Naive thymus-derived CD4-positive, alpha-beta T cell (primary cell): ENCODE measurements at regions of chr14 and their contacts with region 1.

Region 1: GRCh38 chr14:36520601-36521525 is 831 bp upstream of the NKX2-1 start:
- DNase-seq: no peak
- ATAC-seq: no peak
- H3K4me3 ChIP-seq: no peak overlapping the region
- H3K4me3 Mint-ChIP-seq: peak overlapping the region in 8 of 10 donors; percentile 7 to 80 (median 50)
- H3K27ac ChIP-seq: no peak overlapping the region
- H3K27ac Mint-ChIP-seq: peak overlapping the region in 1 of 9 donors; percentile 18
- H3K4me1 ChIP-seq: no peaks in the 10 kb centered on the region
- H3K4me1 Mint-ChIP-seq: peaks cover 4 to 34% (median 24%) of the 10 kb centered on the region in 7 donors
- H3K27me3 ChIP-seq: peaks cover 6 to 16% of the 10 kb centered on the region in 2 donors
- H3K27me3 Mint-ChIP-seq: peaks cover 52 to 77% (median 60%) of the 10 kb centered on the region in 5 donors

Region 2: DNA sequence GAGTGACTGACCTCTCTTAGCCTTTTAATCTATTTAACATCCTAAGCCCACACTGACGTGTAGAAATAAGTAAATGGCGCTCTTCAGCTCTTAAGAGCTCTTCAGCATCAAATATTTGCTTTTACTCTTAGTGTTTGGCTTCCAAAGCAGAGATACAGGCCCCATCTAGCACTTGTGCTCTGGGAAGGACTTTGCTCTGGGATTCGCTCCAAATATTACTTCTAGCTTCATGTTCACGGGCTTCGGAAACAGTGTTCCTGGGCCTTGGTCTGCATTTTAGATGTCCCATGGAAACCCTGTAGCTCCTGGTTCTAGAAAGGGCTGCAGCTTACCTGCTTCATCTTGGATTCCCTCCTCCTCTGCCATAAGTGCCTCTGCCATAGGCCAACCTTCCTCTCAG is 64.2 kb after region 1 on chr14:
- CTCF ChIA-PET with region 1: no interaction called
- POLR2A ChIA-PET with region 1: no interaction called
- intact Hi-C with region 1: loop called in 1 of 2 experiments (anchors 2 kb)
- DNase-seq: no peak
- ATAC-seq: no peak
- H3K4me3 ChIP-seq: no peak overlapping the region
- H3K4me3 Mint-ChIP-seq: no peak overlapping the region
- H3K27ac ChIP-seq: no peak overlapping the region
- H3K27ac Mint-ChIP-seq: no peak overlapping the region
- H3K4me1 ChIP-seq: no peaks in the 10 kb centered on the region
- H3K4me1 Mint-ChIP-seq: peaks cover 0 to 3% (median 0%) of the 10 kb centered on the region in 7 donors
- H3K27me3 ChIP-seq: peaks cover 0 to 10% of the 10 kb centered on the region in 2 donors
- H3K27me3 Mint-ChIP-seq: peaks cover 53 to 81% (median 61%) of the 10 kb centered on the region in 5 donors

Region 3: GRCh38 chr14:36604757-36605505 is 84.1 kb after region 1 on chr14:
- CTCF ChIA-PET with region 1: no interaction called
- POLR2A ChIA-PET with region 1: no interaction called
- intact Hi-C with region 1: no loop called
- DNase-seq: peak in 6 of 9 donors; percentile 2 to 23 (median 5)
- ATAC-seq: no peak
- H3K4me3 ChIP-seq: no peak overlapping the region
- H3K4me3 Mint-ChIP-seq: no peak overlapping the region
- H3K27ac ChIP-seq: no peak overlapping the region
- H3K27ac Mint-ChIP-seq: no peak overlapping the region
- H3K4me1 ChIP-seq: no peaks in the 10 kb centered on the region
- H3K4me1 Mint-ChIP-seq: no peaks in the 10 kb centered on the region
- H3K27me3 ChIP-seq: no peaks in the 10 kb centered on the region
- H3K27me3 Mint-ChIP-seq: peaks cover 5 to 21% (median 14%) of the 10 kb centered on the region in 5 donors

Region 4: GRCh38 chr14:36655963-36656686 is 135.3 kb after region 1 on chr14:
- CTCF ChIA-PET with region 1: no interaction called
- POLR2A ChIA-PET with region 1: no interaction called
- intact Hi-C with region 1: loop called in 1 of 2 experiments (anchors 5 kb)
- DNase-seq: no peak
- ATAC-seq: no peak
- H3K4me3 ChIP-seq: no peak overlapping the region
- H3K4me3 Mint-ChIP-seq: peak overlapping the region in 9 of 10 donors; percentile 35 to 75 (median 54)
- H3K27ac ChIP-seq: no peak overlapping the region
- H3K27ac Mint-ChIP-seq: peak overlapping the region in 1 of 9 donors; percentile 55
- H3K4me1 ChIP-seq: peaks cover 0 to 6% of the 10 kb centered on the region in 2 donors
- H3K4me1 Mint-ChIP-seq: peaks cover 10 to 44% (median 37%) of the 10 kb centered on the region in 7 donors
- H3K27me3 ChIP-seq: peaks cover 7 to 20% of the 10 kb centered on the region in 2 donors
- H3K27me3 Mint-ChIP-seq: peaks cover 85 to 99% (median 89%) of the 10 kb centered on the region in 5 donors

Region 5: DNA sequence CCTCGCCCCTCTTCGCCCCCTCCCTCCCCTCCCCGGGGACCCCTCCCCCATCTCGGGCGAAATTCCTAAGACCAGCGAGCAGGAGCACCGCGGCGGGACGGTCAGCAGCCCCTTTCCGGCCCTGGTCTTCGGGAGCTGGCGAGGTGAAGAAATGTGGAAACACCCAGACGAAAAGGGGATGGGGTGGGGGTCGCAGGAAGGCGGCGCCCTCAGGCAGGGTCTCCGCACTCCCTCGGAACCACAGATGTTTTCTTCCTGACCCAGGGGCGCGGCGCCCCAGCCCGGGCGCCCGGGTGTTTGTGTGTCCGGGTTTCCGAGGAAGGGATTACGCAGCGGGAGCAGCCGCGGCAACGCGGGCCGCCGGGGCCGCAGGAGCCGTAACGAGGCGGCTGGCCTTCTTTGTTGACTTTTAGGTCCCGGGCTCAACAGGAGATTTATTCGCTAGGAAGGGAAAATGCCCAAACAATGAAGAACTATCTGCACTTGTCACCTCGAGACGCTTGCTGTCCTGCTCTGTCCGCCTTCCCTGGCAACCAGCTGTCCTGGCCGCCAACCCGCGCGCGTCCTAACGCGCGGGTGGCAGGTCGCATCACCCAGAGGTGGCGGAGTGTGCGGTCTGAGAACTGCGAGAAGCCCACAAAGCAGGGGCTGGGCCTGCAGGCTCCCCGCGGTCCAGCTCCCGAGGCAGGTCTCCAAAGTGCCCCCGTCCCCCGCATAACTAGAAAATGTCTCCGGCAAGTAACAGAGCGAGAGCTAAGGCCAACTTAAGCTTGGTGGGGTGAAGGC is 1067.2 kb after region 1 on chr14:
- CTCF ChIA-PET with region 1: no interaction called
- POLR2A ChIA-PET with region 1: no interaction called
- intact Hi-C with region 1: loop called in 1 of 2 experiments (anchors 5 kb)
- DNase-seq: no peak
- ATAC-seq: no peak
- H3K4me3 ChIP-seq: no peak overlapping the region
- H3K4me3 Mint-ChIP-seq: no peak overlapping the region
- H3K27ac ChIP-seq: no peak overlapping the region
- H3K27ac Mint-ChIP-seq: peak overlapping the region in 1 of 9 donors; percentile 15
- H3K4me1 ChIP-seq: no peaks in the 10 kb centered on the region
- H3K4me1 Mint-ChIP-seq: peaks cover 0 to 2% (median 0%) of the 10 kb centered on the region in 7 donors
- H3K27me3 ChIP-seq: peaks cover 0 to 7% of the 10 kb centered on the region in 2 donors
- H3K27me3 Mint-ChIP-seq: peaks cover 64 to 77% (median 66%) of the 10 kb centered on the region in 5 donors

Region 6: GRCh38 chr14:37594238-37594914 is 1073.5 kb after region 1 on chr14:
- CTCF ChIA-PET with region 1: no interaction called
- POLR2A ChIA-PET with region 1: no interaction called
- intact Hi-C with region 1: loop called in 1 of 2 experiments (anchors 5 kb)
- DNase-seq: no peak
- ATAC-seq: no peak
- H3K4me3 ChIP-seq: no peak overlapping the region
- H3K4me3 Mint-ChIP-seq: peak overlapping the region; percentile 54 to 82 (median 70)
- H3K27ac ChIP-seq: no peak overlapping the region
- H3K27ac Mint-ChIP-seq: peak overlapping the region in 2 of 9 donors; percentile 4 to 72
- H3K4me1 ChIP-seq: no peaks in the 10 kb centered on the region
- H3K4me1 Mint-ChIP-seq: peaks cover 7 to 42% (median 26%) of the 10 kb centered on the region in 7 donors
- H3K27me3 ChIP-seq: peaks cover 4 to 21% of the 10 kb centered on the region in 2 donors
- H3K27me3 Mint-ChIP-seq: peaks cover 72 to 81% (median 77%) of the 10 kb centered on the region in 5 donors